CD8-positive, alpha-beta memory T cell (primary cell): ENCODE measurements at regions of chr7 and their contacts with region 1.

Region 1: GRCh38 chr7:151028131-151028947 is at the start of gene ABCB8:
- DNase-seq: peak; percentile 93 to 99 (median 99)
- H3K4me3 ChIP-seq: peak within 1 kb of the TSS; percentile 100
- H3K4me3 Mint-ChIP-seq: peak within 1 kb of the TSS; percentile 87 to 98 (median 96)
- H3K27ac ChIP-seq: peak within 1 kb of the TSS; percentile 90
- H3K27ac Mint-ChIP-seq: peak within 1 kb of the TSS; percentile 98 to 100 (median 99)
- H3K4me1 ChIP-seq: peaks cover 20% of the 10 kb centered on the region
- H3K4me1 Mint-ChIP-seq: peaks cover 18 to 35% (median 28%) of the 10 kb centered on the region in 3 donors
- H3K27me3 ChIP-seq: no peaks in the 10 kb centered on the region
- H3K27me3 Mint-ChIP-seq: peaks cover 0 to 1% of the 10 kb centered on the region in 2 donors
- total RNA-seq, gene ABCB8: 49.2 to 52.3 TPM

Region 2: DNA sequence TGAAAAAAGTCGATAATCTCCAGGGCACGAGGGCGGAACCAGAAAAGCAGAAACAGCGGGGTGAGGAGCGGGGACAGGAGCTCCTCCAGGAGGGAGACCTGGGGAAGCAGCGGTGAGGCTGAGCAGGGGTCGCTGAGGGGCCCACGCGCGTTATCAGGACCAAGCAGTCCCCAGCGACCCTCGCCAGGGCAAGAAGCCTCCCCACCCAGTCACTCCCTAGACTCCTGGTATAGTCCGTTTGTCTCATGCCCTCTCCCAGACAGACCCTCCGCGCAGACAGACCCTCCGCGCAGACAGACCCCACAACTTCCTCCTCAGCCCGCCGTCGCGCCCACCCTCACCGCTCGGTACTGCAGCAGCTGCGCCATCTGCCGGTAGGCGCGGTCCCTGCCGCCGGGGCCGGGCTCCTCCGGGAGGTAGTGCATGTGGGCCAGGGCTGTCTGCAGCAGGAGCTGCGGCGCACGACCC is 10.4 kb before region 1 on chr7:
- CTCF ChIA-PET with region 1: interaction called, 35 read pairs
- POLR2A ChIA-PET with region 1: interaction called, 13 read pairs
- DNase-seq: peak; percentile 72 to 86 (median 73)
- H3K4me3 ChIP-seq: peak overlapping the region; percentile 67
- H3K4me3 Mint-ChIP-seq: peak overlapping the region; percentile 80 to 93 (median 85)
- H3K27ac ChIP-seq: no peak overlapping the region
- H3K27ac Mint-ChIP-seq: peak overlapping the region; percentile 66 to 96 (median 90)
- H3K4me1 ChIP-seq: peaks cover 58% of the 10 kb centered on the region
- H3K4me1 Mint-ChIP-seq: peaks cover 39 to 61% (median 46%) of the 10 kb centered on the region in 3 donors
- H3K27me3 ChIP-seq: no peaks in the 10 kb centered on the region
- H3K27me3 Mint-ChIP-seq: peaks cover 15 to 22% of the 10 kb centered on the region in 2 donors

Region 3: DNA sequence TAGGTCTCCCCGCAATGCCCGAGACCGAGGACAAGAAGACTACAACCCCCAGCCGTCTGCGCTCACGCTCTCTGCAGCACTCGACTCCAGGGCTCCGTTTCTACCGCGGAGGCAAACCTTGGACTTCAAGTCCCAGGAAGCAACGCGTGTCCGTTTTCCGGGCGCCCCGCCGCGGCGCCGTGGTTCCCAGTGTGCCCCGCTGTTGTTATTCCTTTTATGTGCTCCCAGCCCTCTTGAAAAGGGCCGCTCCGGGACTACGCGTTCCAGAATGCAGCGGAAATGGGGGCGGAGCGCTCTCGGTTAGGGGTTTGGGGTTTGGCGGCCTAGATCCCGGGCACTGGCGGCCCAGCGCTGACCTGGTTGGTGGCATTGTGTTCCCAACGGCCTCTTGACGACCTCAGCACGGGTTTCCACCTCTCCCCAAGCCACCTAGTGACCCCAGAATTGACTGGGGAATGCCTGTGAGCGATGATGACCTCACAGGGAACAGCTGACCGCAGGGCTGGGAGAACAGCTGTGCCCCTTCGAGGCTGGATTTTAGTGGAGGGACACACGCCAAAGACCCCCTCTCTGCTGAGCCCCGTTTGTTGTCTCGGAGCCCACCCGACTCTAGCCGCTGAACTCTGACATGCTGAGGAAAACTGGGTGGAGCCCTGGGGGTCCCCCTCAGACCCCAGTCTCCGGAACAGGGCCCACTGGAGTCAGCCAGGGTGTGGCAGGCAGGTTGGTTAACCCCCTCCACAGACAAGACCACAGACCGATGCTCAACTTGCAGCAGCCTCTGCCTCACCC is 29.8 kb after region 1 on chr7:
- CTCF ChIA-PET with region 1: interaction called, 4 read pairs
- POLR2A ChIA-PET with region 1: interaction called, 10 read pairs
- DNase-seq: peak; percentile 94 to 99 (median 96)
- H3K4me3 ChIP-seq: peak overlapping the region; percentile 94
- H3K4me3 Mint-ChIP-seq: peak overlapping the region; percentile 88 to 95 (median 94)
- H3K27ac ChIP-seq: peak overlapping the region; percentile 91
- H3K27ac Mint-ChIP-seq: peak overlapping the region; percentile 88 to 98 (median 98)
- H3K4me1 ChIP-seq: peaks cover 39% of the 10 kb centered on the region
- H3K4me1 Mint-ChIP-seq: peaks cover 24 to 47% (median 36%) of the 10 kb centered on the region in 3 donors
- H3K27me3 ChIP-seq: no peaks in the 10 kb centered on the region
- H3K27me3 Mint-ChIP-seq: no peaks in the 10 kb centered on the region